Activated T-helper 1 cell treated with anti-CD3 and anti-CD28 coated beads, Interleukin-12 subunit alpha, Interleukin-12 subunit beta, Interleukin-2, Interleukin-4 antibody, amounts not matched to agents 30 ng/mL and 10 ng/mL and 1 ng/mL, durations not matched to agents 14 hours and 24 hours and 36 hours (primary cell): ENCODE measurements at regions of chr14 and their contacts with region 1.

Region 1: GRCh38 chr14:67666750-67667449 is 7.5 kb downstream of the VTI1B start:
- DNase-seq: peak; percentile 14
- H3K4me3 Mint-ChIP-seq: no peak overlapping the region
- H3K27ac Mint-ChIP-seq: no peak overlapping the region
- H3K4me1 Mint-ChIP-seq: peaks cover 33% of the 10 kb centered on the region
- H3K27me3 Mint-ChIP-seq: no peaks in the 10 kb centered on the region

Region 2: GRCh38 chr14:67426983-67427606 is 239.8 kb before region 1 on chr14:
- intact Hi-C with region 1: loop called (anchors 1 kb)
- DNase-seq: peak; percentile 61
- H3K4me3 Mint-ChIP-seq: no peak overlapping the region
- H3K27ac Mint-ChIP-seq: no peak overlapping the region
- H3K4me1 Mint-ChIP-seq: peaks cover 7% of the 10 kb centered on the region
- H3K27me3 Mint-ChIP-seq: peaks cover 27% of the 10 kb centered on the region

Region 3: GRCh38 chr14:67583711-67584644 is 82.9 kb before region 1 on chr14:
- intact Hi-C with region 1: loop called (anchors 1 kb)
- DNase-seq: peak; percentile 12
- H3K4me3 Mint-ChIP-seq: no peak overlapping the region
- H3K27ac Mint-ChIP-seq: no peak overlapping the region
- H3K4me1 Mint-ChIP-seq: peaks cover 6% of the 10 kb centered on the region
- H3K27me3 Mint-ChIP-seq: no peaks in the 10 kb centered on the region

Region 4: GRCh38 chr14:67619446-67620216 is 47.3 kb before region 1 on chr14 and contains the start of gene ARG2:
- intact Hi-C with region 1: loop called (anchors 1 kb)
- DNase-seq: peak; percentile 94
- H3K4me3 Mint-ChIP-seq: peak within 1 kb of the TSS; percentile 86
- H3K27ac Mint-ChIP-seq: peak within 1 kb of the TSS; percentile 71
- H3K4me1 Mint-ChIP-seq: peaks cover 39% of the 10 kb centered on the region
- H3K27me3 Mint-ChIP-seq: peaks cover 14% of the 10 kb centered on the region
- total RNA-seq, gene ARG2: 5.2 and 7.1 TPM in 2 replicates

Region 5: GRCh38 chr14:67704484-67705089 is 37.7 kb after region 1 on chr14:
- intact Hi-C with region 1: loop called (anchors 1 kb)
- DNase-seq: peak; percentile 12
- H3K4me3 Mint-ChIP-seq: no peak overlapping the region
- H3K27ac Mint-ChIP-seq: no peak overlapping the region
- H3K4me1 Mint-ChIP-seq: no peaks in the 10 kb centered on the region
- H3K27me3 Mint-ChIP-seq: peaks cover 4% of the 10 kb centered on the region

Region 6: DNA sequence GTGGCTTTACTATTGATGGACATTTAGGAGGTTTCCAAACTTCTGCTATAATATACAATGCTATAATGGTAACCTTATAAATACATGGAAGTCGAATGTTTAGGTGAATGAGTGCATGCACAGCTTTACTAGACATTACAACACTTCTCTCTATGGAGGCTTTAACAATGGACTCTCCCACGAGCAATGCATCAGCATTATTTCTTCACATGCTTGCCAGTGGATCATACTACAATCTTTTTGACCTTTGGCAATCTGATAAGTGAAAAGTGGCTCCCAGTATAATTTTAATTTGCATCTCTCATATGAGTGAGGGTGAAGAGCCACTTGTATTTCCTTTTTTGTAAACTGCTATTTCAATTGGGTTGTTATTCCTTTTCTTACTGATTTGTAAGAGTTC is 53.0 kb after region 1 on chr14:
- intact Hi-C with region 1: no loop called
- DNase-seq: no peak
- H3K4me3 Mint-ChIP-seq: no peak overlapping the region
- H3K27ac Mint-ChIP-seq: no peak overlapping the region
- H3K4me1 Mint-ChIP-seq: no peaks in the 10 kb centered on the region
- H3K27me3 Mint-ChIP-seq: peaks cover 22% of the 10 kb centered on the region

Region 7: DNA sequence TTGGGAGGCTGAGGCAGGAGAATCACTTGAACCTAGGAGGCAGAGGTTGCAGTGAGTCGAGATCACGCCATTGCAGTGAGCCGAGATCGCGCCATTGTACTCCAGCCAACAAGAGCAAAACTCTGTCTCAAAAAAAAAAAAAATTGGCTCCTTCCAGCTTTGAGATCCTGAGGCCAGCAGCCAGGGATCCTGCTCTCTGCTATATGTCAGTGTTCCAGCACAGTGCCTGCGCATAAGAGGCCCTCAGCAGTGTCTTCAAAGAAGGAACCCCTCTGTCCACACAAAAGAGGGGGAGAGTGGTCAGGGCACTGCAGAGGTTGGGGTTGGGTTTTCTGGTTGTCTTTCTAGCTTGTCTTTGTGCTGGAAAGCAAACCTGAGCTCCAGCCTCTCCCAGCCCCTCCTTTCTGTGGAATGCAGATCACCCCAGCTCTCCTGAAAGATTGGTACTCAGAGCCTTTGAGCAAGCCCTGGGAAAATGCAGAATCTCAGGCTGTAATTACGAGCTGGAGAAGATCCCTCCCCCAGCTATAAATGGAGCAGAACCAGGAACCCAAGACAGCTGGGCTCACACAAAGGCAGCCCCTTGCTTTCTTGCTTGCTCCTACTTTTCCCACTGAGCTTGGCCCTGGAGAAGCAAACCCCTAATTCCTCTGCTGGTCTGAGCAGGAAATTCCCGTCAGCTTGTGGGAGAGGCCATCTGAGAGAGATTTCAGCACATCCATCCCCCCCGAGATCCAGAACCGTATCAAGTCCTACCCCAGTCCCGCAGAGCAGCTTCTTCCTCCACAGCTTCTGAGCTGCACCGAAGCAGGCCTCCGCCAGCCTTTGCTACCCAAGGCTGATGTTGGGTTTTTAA is 920.2 kb after region 1 on chr14:
- intact Hi-C with region 1: no loop called
- DNase-seq: no peak
- H3K4me3 Mint-ChIP-seq: no peak overlapping the region
- H3K27ac Mint-ChIP-seq: no peak overlapping the region
- H3K4me1 Mint-ChIP-seq: no peaks in the 10 kb centered on the region
- H3K27me3 Mint-ChIP-seq: peaks cover 5% of the 10 kb centered on the region